ENCODE measurements at regions of chr5 and their contacts with region 1.

Region 1: GRCh38 chr5:56270568-56271392 is 37.6 kb upstream of the ANKRD55 start:
- DNase-seq: peak; percentile 87
- H3K4me3 ChIP-seq: no peak overlapping the region
- H3K27ac ChIP-seq: peak overlapping the region in 2 of 3 donors; percentile 26 to 62
- H3K4me1 ChIP-seq: peaks cover 7 to 22% of the 10 kb centered on the region in 2 donors
- H3K27me3 ChIP-seq: no peaks in the 10 kb centered on the region
- CTCF ChIP-seq: peak; percentile 96 to 99 (median 98)
- POLR2A ChIP-seq: no peak

Region 2: DNA sequence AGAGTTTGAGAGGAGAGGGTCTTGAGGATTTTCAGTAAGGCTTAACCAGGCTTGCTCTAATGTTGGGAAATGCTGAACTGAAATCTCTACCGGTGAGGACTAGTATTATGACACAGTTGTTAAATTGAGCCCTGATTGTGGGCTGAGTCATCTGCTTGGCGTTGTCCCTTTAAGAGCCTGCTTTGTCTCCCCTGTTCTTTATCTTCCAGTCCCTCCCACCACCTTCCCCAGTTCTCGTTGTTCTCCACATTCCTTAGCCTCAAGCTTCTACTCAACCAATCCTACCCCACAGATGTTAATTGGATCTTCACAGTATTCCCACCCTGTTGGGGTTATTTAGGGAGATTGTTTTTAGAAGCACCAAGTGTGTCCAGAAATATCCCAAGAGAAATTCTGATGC is 95.3 kb before region 1 on chr5:
- intact Hi-C with region 1: no loop called
- DNase-seq: no peak
- H3K4me3 ChIP-seq: no peak overlapping the region
- H3K27ac ChIP-seq: no peak overlapping the region
- H3K4me1 ChIP-seq: peaks cover 0 to 11% of the 10 kb centered on the region in 2 donors
- H3K27me3 ChIP-seq: no peaks in the 10 kb centered on the region
- CTCF ChIP-seq: no peak
- POLR2A ChIP-seq: no peak

Region 3: DNA sequence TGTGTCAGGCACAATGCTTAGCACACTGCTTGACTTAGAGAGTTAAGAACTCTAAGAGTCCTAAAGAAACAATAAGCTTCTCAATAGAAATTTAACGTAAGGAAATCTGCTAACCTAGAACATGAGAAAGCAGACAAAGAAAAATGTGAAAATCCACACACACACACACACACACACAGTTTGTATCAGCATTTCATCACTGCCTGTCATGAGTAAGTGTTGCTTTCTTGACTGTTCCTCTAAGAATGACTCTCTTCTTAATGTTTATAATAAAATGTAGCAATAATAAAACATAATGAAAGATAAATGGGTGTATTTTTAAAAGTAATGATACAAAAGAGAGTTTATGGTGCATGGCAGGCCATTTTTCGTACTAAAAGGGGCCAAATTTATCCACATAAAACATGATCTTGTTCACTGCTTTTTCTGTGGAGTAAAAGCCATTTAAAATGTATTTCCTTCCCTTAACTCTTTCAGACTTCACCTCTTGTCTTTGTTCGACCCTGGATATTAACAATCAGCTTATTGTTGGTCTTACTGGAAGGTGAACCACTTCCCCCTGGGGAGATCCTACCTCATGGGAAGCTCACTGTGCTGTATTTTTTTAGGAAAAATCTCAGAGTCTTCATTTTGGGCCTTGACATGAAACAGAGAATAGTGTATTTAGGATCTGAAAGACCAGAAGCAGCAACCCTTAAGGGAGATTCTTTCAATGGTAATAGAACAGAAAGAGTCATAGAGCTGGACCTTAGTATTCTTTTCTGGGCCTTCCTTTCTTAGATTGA is 69.6 kb after region 1 on chr5:
- intact Hi-C with region 1: no loop called
- DNase-seq: no peak
- H3K4me3 ChIP-seq: no peak overlapping the region
- H3K27ac ChIP-seq: no peak overlapping the region
- H3K4me1 ChIP-seq: no peaks in the 10 kb centered on the region
- H3K27me3 ChIP-seq: no peaks in the 10 kb centered on the region
- CTCF ChIP-seq: no peak
- POLR2A ChIP-seq: no peak

Region 4: GRCh38 chr5:56481428-56482357 is 210.9 kb after region 1 on chr5:
- intact Hi-C with region 1: loop called (anchors 10 kb)
- DNase-seq: peak; percentile 70 to 74
- H3K4me3 ChIP-seq: peak overlapping the region; percentile 22 to 67 (median 48)
- H3K27ac ChIP-seq: peak overlapping the region; percentile 95 to 99 (median 99)
- H3K4me1 ChIP-seq: peaks cover 25 to 31% of the 10 kb centered on the region in 2 donors
- H3K27me3 ChIP-seq: no peaks in the 10 kb centered on the region
- CTCF ChIP-seq: peak in 2 of 6 experiments; percentile 15 to 19
- POLR2A ChIP-seq: peak in 1 of 2 donors; percentile 66

Region 5: DNA sequence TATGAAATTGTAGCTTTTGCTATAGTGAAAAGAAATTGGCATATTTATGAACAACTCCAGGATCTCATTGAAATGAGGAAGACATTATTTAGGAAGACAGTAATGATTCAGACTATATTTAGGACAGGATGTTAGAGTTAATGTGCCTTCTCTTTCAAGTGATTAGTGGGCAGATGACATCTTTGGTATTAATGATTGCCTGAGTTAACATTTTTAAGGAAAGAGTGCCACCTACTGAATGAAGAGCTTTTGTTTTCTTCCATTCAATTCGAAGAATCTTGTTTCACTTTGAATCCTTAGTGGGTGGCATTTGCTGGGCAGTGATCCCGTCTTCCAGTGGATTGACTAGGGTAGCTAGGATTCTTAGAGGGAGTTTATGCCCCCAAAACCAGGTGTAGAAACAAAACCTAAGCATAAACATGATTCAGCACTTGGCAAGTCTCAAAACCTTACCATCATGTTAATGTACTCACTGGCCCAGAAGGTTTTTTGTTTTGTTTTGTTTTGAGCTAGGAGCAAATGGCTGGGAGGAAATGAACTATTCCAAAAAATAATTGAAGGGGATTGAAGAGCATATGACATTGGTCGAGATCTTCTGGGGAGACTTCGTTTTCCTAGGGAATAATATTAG is 567.7 kb after region 1 on chr5:
- intact Hi-C with region 1: loop called (anchors 5 kb)
- DNase-seq: peak; percentile 46 to 66
- H3K4me3 ChIP-seq: no peak overlapping the region
- H3K27ac ChIP-seq: peak overlapping the region; percentile 21 to 71 (median 60)
- H3K4me1 ChIP-seq: peaks cover 33 to 76% of the 10 kb centered on the region in 2 donors
- H3K27me3 ChIP-seq: no peaks in the 10 kb centered on the region
- CTCF ChIP-seq: peak in 4 of 6 experiments; percentile 51 to 85 (median 67)
- POLR2A ChIP-seq: no peak

Region 6: DNA sequence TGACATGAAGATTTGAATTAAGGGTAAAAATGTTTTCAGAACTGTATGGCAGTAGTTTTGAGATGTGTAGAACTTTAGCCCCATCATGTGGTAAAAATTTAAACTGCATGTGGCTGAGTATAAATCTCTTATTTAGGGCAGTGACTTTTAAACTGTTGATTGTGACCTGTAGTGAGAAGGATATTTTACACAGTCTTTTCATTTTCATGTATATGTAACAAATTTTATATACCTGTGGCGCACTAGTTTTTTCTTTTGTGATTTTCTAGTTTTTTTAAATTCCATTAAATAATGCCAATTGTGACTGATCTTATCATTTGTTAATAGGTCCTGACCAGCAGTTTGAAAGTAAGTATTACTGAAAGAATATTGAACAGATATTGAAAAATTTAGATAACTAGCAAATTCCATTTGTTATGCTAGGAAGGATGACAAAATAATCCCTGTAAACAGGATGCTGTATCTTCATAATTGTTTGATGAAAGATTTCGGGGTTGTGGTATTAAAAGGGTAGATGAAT is 950.3 kb after region 1 on chr5:
- intact Hi-C with region 1: loop called (anchors 10 kb)
- DNase-seq: no peak
- H3K4me3 ChIP-seq: no peak overlapping the region
- H3K27ac ChIP-seq: no peak overlapping the region
- H3K4me1 ChIP-seq: peaks cover 0 to 4% of the 10 kb centered on the region in 2 donors
- H3K27me3 ChIP-seq: no peaks in the 10 kb centered on the region
- CTCF ChIP-seq: peak; percentile 78 to 97 (median 92)
- POLR2A ChIP-seq: no peak